Ovary (tissue), 10 donors: ENCODE measurements at regions of chr2 and their contacts with region 1.

Region 1: DNA sequence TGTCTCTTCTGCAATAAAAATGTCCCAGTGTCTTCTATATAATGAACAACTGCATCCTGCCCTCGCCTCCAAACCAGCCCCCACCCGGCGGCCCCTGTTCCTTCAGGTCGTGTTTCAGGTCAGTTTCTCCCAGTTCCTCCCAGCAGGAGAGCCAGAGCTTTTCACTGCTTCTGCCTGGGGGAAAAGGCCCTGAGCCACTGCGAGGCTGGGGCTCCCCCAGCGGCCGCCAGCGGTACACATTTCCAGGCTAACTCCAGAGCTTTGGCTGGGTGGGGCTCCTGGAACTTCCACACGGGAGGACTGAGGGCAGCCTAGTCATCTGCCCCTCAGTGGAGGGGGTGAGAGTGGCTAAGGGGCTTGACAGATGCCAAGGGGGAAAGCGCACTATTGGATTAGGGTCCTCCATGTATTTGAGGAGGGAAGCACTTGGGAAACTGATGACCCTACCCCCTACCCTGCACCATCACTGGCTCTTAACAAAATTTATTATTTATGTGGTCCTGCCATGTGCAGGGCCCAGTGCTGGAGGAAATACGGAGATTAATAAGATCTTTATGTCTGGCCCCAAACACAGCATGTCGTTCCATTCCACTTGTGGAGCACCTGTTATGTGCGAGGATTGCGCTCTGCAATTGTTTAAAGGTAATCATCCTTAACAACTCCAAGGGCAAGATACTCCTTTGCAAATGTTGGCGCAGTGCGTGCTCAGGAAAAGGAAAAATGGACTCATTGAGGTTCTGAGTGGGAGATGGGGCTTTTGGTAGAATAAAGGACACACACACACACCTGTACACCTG is 17.3 kb upstream of the CYS1 start:
- DNase-seq: peak; percentile 44 to 79 (median 66)
- H3K4me3 ChIP-seq: no peak overlapping the region
- H3K27ac ChIP-seq: no peak overlapping the region
- H3K4me1 ChIP-seq: peaks cover 2% of the 10 kb centered on the region
- H3K27me3 ChIP-seq: no peaks in the 10 kb centered on the region
- CTCF ChIP-seq: peak; percentile 76 to 82 (median 78)
- EP300 ChIP-seq: no peak
- POLR2A ChIP-seq: no peak

Region 2: GRCh38 chr2:9805435-9806326 is 291.9 kb before region 1 on chr2:
- intact Hi-C with region 1: loop called in 2 of 4 experiments (anchors 5 to 10 kb)
- DNase-seq: peak in 2 of 5 donors; percentile 43 to 52
- H3K4me3 ChIP-seq: no peak overlapping the region
- H3K27ac ChIP-seq: no peak overlapping the region
- H3K4me1 ChIP-seq: no peaks in the 10 kb centered on the region
- H3K27me3 ChIP-seq: no peaks in the 10 kb centered on the region
- CTCF ChIP-seq: no peak
- EP300 ChIP-seq: no peak
- POLR2A ChIP-seq: no peak